Right ventricle myocardium inferior (tissue), 1 donor: ENCODE measurements at regions of chr2 and their contacts with region 1.

Region 1: DNA sequence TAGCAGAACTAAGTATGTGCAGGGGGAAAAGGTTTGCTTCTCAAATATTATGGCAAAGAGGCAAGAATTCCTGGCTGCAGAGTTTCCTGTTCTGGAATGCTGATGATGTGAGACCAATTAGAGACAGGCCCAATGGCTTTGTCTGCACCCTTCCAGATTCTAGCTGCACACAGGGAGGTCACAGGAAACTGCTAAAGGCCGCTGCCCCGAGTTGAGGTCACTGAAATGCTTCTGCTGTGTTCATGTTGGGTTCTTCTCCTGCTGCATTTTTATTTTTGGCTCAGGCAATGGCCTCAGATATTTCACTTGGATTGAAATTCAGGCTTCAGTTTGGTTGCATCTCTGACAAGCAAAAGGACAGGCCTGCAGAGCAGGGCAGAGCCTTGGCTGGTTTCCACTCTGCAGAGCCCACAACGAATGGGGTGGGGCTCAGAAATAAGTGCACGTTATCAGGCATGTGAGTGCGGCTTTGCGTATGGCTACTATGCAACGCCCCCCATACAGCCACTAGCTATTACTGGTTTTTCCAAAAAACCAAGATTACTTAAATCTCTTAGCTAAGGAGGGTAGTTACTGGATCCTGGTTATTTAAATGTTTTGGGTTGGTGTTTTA is 66.9 kb upstream of the FZD5 start:
- DNase-seq: no peak
- ATAC-seq: peak; percentile 94

Region 2: DNA sequence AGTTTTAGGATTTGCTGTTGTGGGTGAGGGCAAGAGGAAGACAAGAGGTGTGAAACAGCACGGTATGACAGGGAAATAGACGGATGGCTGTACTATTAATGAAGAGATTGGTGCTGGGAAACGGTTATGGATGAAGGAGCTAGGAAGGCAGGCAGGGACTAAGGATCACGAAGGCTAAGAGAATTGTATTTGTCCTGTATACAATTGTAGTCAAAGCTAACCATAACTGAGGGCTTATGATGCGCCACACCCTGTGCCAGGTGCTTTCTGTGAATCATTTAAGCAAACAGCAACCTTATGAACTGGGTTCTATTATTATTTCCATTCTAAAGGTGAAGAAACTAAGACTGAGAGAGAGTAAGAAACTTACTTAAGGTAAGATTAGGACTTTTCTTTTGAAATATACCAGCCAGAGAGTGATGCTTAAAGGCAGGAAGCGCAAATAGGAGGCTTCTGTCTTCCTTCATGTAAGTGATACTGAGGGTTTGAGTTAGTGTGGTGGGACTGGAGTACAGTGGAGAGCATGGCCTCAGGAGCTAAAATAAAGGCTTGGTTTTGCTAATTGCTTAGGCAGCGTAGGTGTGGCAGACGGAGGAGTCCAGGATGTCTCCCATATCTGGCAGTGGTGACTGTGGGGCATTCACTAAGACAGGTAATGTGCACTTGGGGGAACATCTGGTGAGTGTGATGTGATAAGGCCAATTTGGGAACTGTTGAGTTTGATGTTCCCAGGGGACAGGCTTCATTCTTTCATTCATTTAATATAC is 102.9 kb after region 1 on chr2:
- intact Hi-C with region 1: loop called (anchors 5 kb)
- DNase-seq: no peak
- ATAC-seq: peak; percentile 32